CD4-positive, alpha-beta T cell (primary cell): ENCODE measurements at regions of chr2 and their contacts with region 1.

Region 1: DNA sequence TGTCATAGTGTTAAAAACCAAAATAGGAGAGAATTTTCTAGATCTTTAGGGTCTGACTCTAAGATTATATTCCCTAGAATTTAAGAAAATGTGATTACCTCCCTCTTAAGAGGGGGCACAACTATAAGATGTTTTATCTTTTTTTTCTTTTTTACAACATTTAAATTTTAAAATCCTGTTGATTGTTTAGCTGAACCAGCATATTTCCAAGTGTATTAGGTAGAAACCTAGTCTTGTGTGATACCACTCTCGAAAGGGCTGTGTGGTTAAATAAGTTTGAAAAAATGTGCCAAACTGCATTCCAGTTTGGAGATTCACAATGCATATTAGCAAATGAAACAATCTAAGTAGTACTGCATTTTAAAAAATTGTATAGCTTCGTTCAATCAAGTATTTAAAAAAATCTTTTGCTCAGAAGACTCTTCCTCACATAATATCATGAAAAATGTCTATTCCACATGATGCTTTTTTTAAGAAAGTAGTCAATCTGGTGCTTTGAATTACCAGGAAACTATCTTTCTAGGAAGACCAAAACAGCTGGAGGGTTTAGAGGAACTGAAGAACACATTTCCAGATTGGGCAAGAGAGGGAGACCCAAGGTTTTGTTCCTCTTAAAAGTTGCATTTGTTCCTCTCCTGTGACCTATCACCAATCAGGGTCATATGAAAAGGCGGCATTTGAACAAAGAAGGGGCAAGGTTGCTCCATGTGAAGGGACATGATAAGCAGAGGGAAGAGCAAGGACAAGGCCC is 98.8 kb downstream of the DPP4 start:
- DNase-seq: no peak
- ATAC-seq: no peak
- H3K4me3 ChIP-seq: no peak overlapping the region
- H3K4me3 Mint-ChIP-seq: no peak overlapping the region
- H3K27ac ChIP-seq: no peak overlapping the region
- H3K27ac Mint-ChIP-seq: no peak overlapping the region
- H3K4me1 ChIP-seq: peaks cover 3% of the 10 kb centered on the region
- H3K4me1 Mint-ChIP-seq: peaks cover 8% of the 10 kb centered on the region
- H3K27me3 ChIP-seq: no peaks in the 10 kb centered on the region
- H3K27me3 Mint-ChIP-seq: no peaks in the 10 kb centered on the region
- CTCF ChIP-seq: no peak

Region 2: GRCh38 chr2:161946489-161947107 is 28.6 kb before region 1 on chr2:
- CTCF ChIA-PET with region 1: interaction called, 4 read pairs
- POLR2A ChIA-PET with region 1: interaction called, 3 read pairs
- intact Hi-C with region 1: loop called in 1 of 2 experiments (anchors 5 kb)
- DNase-seq: peak in 4 of 14 experiments; percentile 12 to 48 (median 41)
- ATAC-seq: no peak
- H3K4me3 ChIP-seq: no peak overlapping the region
- H3K4me3 Mint-ChIP-seq: no peak overlapping the region
- H3K27ac ChIP-seq: no peak overlapping the region
- H3K27ac Mint-ChIP-seq: no peak overlapping the region
- H3K4me1 ChIP-seq: no peaks in the 10 kb centered on the region
- H3K4me1 Mint-ChIP-seq: no peaks in the 10 kb centered on the region
- H3K27me3 ChIP-seq: no peaks in the 10 kb centered on the region
- H3K27me3 Mint-ChIP-seq: no peaks in the 10 kb centered on the region
- CTCF ChIP-seq: peak; percentile 78

Region 3: DNA sequence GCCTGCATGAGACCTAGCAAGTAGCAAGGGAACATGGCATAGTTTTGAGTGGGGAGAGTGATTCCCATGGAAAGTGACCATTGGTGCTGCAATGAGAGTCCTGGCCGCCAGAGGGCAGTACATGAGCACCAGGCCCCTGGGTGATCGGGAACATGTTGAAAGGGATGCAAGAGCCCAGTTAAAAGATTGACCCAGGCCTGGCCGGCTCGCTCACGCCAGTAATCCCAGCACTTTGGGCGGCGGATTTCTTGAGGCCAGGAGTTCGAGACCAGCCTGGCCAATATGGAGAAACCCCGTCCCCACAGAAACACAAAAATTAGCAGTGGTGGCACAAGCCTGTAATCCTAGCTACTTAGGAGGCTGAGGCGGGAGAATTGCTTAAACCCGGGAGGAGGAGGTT is 245.8 kb after region 1 on chr2:
- CTCF ChIA-PET with region 1: no interaction called
- POLR2A ChIA-PET with region 1: no interaction called
- intact Hi-C with region 1: no loop called
- DNase-seq: peak; percentile 7 to 67 (median 38)
- ATAC-seq: peak; percentile 66
- H3K4me3 ChIP-seq: no peak overlapping the region
- H3K4me3 Mint-ChIP-seq: no peak overlapping the region
- H3K27ac ChIP-seq: no peak overlapping the region
- H3K27ac Mint-ChIP-seq: no peak overlapping the region
- H3K4me1 ChIP-seq: no peaks in the 10 kb centered on the region
- H3K4me1 Mint-ChIP-seq: no peaks in the 10 kb centered on the region
- H3K27me3 ChIP-seq: peaks cover 2 to 9% of the 10 kb centered on the region in 2 experiments
- H3K27me3 Mint-ChIP-seq: peaks cover 30% of the 10 kb centered on the region
- CTCF ChIP-seq: peak; percentile 81